HEK293T (cell line): ENCODE measurements at regions of chr11 and their contacts with region 1.

Region 1: DNA sequence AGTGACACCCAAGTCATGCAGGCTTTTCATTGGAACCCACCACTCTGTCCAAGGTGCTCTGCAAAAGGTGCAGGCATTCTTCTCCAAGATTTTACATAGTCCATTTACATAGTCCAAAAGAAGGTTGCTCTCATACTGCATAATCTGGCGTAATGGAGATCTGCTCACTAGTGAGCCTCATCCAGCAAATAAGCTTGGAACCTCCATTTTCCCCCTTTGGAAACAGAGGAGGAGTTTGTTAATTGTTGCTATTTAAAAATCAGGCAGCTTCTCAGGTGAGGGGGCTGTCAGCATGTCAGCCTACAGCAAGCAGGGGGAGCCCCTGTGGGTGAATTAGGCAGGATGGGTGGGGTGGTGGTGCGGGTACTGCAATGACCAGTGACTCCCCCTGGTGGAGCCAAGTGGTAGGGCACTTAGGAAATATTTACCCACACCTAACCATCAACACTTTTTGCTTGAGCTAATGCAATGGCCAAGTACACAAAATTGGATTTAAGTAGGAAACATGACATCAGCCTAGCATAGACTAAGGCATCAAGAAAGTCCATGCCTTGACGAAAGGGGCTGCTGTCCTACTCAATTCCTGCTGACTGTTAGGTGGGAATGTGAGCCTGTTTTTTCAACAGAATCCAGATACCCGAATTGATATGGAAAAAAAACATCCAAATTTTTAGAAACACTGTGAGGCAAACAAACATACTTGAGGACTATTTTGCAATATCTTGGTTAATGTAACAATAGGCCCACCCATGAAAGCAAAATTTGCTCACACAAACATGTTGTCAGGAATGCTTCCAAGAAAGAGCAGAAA is 64.5 kb downstream of the AMBRA1 start:
- DNase-seq: peak; percentile 83

Region 2: GRCh38 chr11:46249103-46249937 is 280.0 kb before region 1 on chr11:
- CTCF ChIA-PET with region 1: no interaction called
- POLR2A ChIA-PET with region 1: no interaction called
- DNase-seq: no peak

Region 3: GRCh38 chr11:46410021-46410420 is 119.3 kb before region 1 on chr11:
- CTCF ChIA-PET with region 1: no interaction called
- POLR2A ChIA-PET with region 1: no interaction called
- DNase-seq: peak; percentile 33

Region 4: DNA sequence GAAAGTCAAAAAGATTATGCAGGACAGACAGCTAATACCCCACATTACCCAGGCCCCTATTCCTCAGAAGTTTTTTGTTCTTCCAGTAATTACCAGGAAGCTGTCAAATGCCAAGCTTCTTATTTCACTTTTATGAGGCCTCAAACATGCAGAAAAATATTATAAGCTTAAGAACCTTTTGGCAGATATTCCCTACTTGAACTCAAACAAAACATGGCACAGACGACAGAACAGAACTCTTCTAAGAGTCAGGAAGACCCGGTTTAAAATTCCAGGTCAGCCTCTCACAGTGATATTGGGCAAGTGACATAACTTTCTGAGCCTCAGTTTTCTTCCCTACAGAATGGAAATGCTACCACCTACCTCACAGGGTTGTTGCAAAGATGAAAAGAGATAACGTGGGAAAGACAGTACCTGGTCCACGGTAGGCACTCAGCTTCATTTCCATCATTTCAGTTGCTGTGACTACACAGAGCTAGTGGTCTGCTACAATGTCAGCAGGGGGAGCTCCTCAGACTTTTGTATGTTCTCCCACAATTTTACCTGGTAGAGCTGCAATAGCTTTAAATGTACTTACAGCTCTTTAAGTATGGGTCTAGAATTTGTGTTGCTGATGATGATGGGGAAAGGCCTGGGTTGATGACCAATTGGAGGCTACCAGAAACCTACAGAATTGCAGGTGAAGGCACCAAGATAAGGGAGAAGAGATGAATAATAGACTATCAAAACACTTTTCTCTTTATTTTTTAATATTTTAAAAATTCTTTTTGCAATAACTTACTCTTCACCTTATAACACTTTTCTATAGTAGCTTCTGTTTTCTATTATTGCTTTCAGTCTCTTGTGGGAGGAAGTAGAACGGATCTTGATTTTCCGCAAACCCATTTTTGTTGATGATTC is 39.4 kb before region 1 on chr11:
- CTCF ChIA-PET with region 1: interaction called, 16 read pairs
- POLR2A ChIA-PET with region 1: no interaction called
- DNase-seq: peak; percentile 58

Region 5: GRCh38 chr11:46499821-46500220 is 29.5 kb before region 1 on chr11:
- CTCF ChIA-PET with region 1: interaction called, 10 read pairs
- POLR2A ChIA-PET with region 1: no interaction called
- DNase-seq: no peak